H1 (cell line): ENCODE measurements at regions of chr17 and their contacts with region 1.

Region 1: GRCh38 chr17:19447085-19447583 is 36.1 kb downstream of the RNF112 start:
- DNase-seq: peak in 1 of 2 experiments; percentile 93
- H3K4me3 ChIP-seq: no peak overlapping the region
- H3K27ac ChIP-seq: no peak overlapping the region
- H3K4me1 ChIP-seq: peaks cover 2 to 9% (median 4%) of the 10 kb centered on the region in 4 experiments; a peak in 4 of 7 replicates
- H3K27me3 ChIP-seq: no peaks in the 10 kb centered on the region
- CTCF ChIP-seq: peak; percentile 59 to 84 (median 83)
- EP300 ChIP-seq: no peak
- POLR2A ChIP-seq: no peak
- RAD21 ChIP-seq: peak; percentile 90 to 92

Region 2: DNA sequence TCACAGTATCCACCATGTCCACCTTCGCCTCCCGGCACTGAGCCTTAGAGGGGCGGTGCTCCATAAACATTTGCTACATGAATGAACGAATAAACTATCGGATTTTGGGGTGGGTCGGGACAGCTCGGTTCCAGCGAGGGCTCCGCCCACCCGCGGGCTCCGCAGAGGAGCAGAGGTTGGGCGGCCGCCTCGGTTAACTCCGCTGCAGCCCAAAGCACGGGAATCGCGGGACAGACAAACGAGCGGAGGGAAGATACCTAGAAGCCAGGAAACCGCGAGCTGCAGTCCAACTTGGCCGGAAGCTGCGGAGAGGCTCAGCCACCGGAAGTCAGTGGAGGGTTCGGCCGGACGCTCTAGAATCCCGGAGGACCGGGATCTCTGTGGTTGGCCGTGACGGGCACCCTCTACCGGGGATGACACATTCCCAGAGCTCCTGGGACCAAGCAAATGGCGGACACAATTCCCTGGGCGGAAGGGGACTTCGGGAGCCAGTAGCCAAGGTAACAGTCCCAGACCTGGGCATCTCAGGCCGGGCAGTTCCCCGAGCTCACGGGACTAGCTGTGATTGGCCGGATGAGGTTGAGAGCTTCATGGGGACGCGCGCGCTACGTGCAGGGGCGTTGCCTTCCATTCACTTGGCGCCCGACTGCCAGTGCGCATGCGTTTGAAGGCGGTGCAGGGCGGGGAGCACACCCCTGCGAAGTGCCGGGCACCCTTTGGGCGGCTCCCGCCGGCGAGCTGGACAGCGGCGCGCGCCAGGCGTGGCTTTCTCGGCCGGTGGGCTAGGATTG is 69.3 kb before region 1 on chr17:
- CTCF ChIA-PET with region 1: interaction called, 10 read pairs
- POLR2A ChIA-PET with region 1: no interaction called
- DNase-seq: peak; percentile 94 to 97
- H3K4me3 ChIP-seq: peak overlapping the region; percentile 59 to 90 (median 82)
- H3K27ac ChIP-seq: peak overlapping the region; percentile 79
- H3K4me1 ChIP-seq: peaks cover 3 to 11% (median 5%) of the 10 kb centered on the region in 4 experiments
- H3K27me3 ChIP-seq: no peaks in the 10 kb centered on the region
- CTCF ChIP-seq: no peak
- EP300 ChIP-seq: no peak
- POLR2A ChIP-seq: peak; percentile 38 to 87
- RAD21 ChIP-seq: no peak

Region 3: GRCh38 chr17:19410875-19411620 is 36.1 kb before region 1 on chr17 and contains the start of gene RNF112:
- CTCF ChIA-PET with region 1: interaction called, 10 read pairs
- POLR2A ChIA-PET with region 1: interaction called, 3 read pairs
- DNase-seq: no peak
- H3K4me3 ChIP-seq: peak within 1 kb of the TSS in 1 of 4 experiments; percentile 46; a peak in 3 of 8 replicates
- H3K27ac ChIP-seq: no peak within 1 kb of the TSS
- H3K4me1 ChIP-seq: peaks cover 0 to 13% (median 6%) of the 10 kb centered on the region in 4 experiments; a peak in 4 of 7 replicates
- H3K27me3 ChIP-seq: peaks cover 0 to 4% (median 0%) of the 10 kb centered on the region in 4 experiments; a peak in 1 of 7 replicates
- CTCF ChIP-seq: peak in 1 of 3 experiments; percentile 6; a peak in 1 of 4 replicates
- EP300 ChIP-seq: no peak
- POLR2A ChIP-seq: no peak
- RAD21 ChIP-seq: peak; percentile 37 to 38; a peak in 2 of 4 replicates
- total RNA-seq, gene RNF112: 2.2 and 2.3 TPM in 2 replicates

Region 4: GRCh38 chr17:19457830-19458271 is 10.7 kb after region 1 on chr17:
- CTCF ChIA-PET with region 1: interaction called, 35 read pairs
- POLR2A ChIA-PET with region 1: interaction called, 13 read pairs
- DNase-seq: peak in 1 of 2 experiments; percentile 49
- H3K4me3 ChIP-seq: peak overlapping the region in 1 of 4 experiments; percentile 23; a peak in 2 of 8 replicates
- H3K27ac ChIP-seq: peak overlapping the region; percentile 30; the same call in 1 of the 2 replicates
- H3K4me1 ChIP-seq: peaks cover 19 to 43% (median 40%) of the 10 kb centered on the region in 4 experiments
- H3K27me3 ChIP-seq: no peaks in the 10 kb centered on the region
- CTCF ChIP-seq: peak in 1 of 3 experiments; percentile 2; a peak in 1 of 4 replicates
- EP300 ChIP-seq: no peak
- POLR2A ChIP-seq: no peak
- RAD21 ChIP-seq: 0 out of 4 replicates have a peak, but pooled peaks of 1 of the 2 experiments have one; percentile 8

Region 5: GRCh38 chr17:19470532-19471261 is 23.6 kb after region 1 on chr17:
- CTCF ChIA-PET with region 1: interaction called, 15 read pairs
- POLR2A ChIA-PET with region 1: no interaction called
- DNase-seq: peak in 1 of 2 experiments; percentile 63
- H3K4me3 ChIP-seq: no peak overlapping the region
- H3K27ac ChIP-seq: no peak overlapping the region
- H3K4me1 ChIP-seq: peaks cover 1 to 10% (median 6%) of the 10 kb centered on the region in 4 experiments; a peak in 6 of 7 replicates
- H3K27me3 ChIP-seq: no peaks in the 10 kb centered on the region
- CTCF ChIP-seq: no peak
- EP300 ChIP-seq: no peak
- POLR2A ChIP-seq: no peak
- RAD21 ChIP-seq: no peak